Endothelial cell of umbilical vein (primary cell): ENCODE measurements at regions of chr12 and their contacts with region 1.

Region 1: GRCh38 chr12:3275171-3276041 is 198.2 kb downstream of the TSPAN9 start:
- DNase-seq: peak; percentile 48
- H3K4me3 ChIP-seq: no peak overlapping the region
- H3K27ac ChIP-seq: no peak overlapping the region
- H3K4me1 ChIP-seq: no peaks in the 10 kb centered on the region
- H3K27me3 ChIP-seq: no peaks in the 10 kb centered on the region
- CTCF ChIP-seq: peak; percentile 95 to 96
- POLR2A ChIP-seq: no peak

Region 2: GRCh38 chr12:3041558-3042164 is 233.7 kb before region 1 on chr12:
- CTCF ChIA-PET with region 1: interaction called, 14 read pairs
- POLR2A ChIA-PET with region 1: no interaction called
- dilution Hi-C with region 1: no loop called
- intact Hi-C with region 1: no loop called
- DNase-seq: peak; percentile 68
- H3K4me3 ChIP-seq: no peak overlapping the region
- H3K27ac ChIP-seq: no peak overlapping the region
- H3K4me1 ChIP-seq: no peaks in the 10 kb centered on the region
- H3K27me3 ChIP-seq: no peaks in the 10 kb centered on the region
- CTCF ChIP-seq: peak; percentile 50 to 70
- POLR2A ChIP-seq: no peak

Region 3: DNA sequence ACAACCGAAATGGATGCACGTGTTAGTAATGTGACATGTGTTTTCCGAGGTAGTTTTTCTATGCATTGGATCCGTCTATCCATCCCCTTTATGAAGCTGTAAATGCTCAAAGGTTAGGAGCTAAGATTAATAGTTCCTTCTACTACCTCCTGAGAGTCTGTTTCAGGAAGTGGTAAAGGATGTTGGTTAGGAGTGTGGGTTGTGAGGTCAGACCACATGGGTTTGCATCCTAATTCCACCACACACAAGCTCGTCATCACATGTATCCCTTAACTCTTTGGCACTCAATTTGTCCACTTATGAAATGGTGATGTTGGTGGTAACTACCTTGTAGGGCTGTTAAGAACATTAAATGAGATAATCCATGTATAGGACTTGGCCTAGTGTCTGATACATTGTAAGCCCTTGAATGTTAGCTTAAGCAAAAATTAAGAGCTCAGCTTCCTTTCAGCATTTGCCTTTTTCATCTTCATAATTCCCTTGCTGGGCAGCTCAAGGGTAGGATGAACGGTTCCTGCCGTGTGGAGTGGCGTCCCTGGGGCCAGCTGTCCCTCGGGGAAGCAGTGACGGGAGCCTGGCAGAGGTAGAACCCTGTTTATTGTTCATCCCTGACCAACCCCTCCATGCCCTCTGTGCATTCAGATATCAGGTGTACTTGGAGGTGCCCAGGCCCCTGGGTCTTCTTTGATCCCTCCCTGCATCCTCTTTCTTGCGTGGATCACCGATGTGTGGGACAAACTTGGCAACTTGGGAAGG is 145.9 kb before region 1 on chr12:
- CTCF ChIA-PET with region 1: interaction called, 312 read pairs
- POLR2A ChIA-PET with region 1: no interaction called
- dilution Hi-C with region 1: loop called (anchors 5 kb)
- intact Hi-C with region 1: no loop called
- DNase-seq: no peak
- H3K4me3 ChIP-seq: no peak overlapping the region
- H3K27ac ChIP-seq: no peak overlapping the region
- H3K4me1 ChIP-seq: peaks cover 26% of the 10 kb centered on the region
- H3K27me3 ChIP-seq: no peaks in the 10 kb centered on the region
- CTCF ChIP-seq: no peak
- POLR2A ChIP-seq: no peak

Region 4: DNA sequence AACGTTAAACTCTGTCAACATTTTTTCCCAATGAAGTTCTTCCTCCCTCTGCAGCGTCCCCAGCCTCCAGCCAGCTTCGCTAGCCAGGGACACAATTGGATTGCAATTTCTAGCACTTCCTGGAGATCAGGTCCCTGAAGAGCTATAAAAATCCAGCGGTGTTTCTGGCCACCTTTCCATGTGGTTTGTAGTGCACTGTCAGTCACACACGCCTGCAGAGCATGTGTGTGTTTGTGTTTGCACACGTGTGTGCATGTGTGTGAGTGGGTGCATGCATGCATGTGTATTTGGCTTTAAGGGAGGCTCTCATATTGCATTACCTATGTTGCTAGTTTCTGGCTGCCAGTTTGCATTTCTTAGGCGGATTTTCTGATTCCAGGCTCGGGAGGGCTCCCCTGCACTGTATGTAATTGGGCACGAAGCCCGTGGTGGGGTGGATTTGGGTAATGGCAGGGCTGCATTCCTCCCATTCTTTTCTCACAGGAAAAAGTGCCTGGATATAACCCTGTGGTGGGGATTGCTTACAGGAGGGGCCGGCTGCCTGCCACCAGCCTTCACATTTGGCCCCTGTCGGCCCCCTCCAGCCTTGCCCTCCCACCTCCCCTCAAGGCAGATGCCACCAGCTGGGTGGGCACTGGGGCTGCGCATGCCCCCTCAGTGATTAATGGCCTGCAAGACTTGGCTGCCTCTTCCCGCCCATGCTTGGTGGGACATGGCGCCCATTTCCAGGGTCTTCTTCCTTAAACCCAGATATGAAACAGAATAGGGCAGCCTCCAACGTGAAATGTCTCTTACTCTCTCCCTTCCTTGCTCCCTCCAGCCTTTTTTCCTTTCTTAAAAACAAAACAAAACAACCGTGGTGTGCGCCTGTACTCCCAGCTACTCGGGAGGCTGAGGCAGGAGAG is 124.2 kb before region 1 on chr12:
- CTCF ChIA-PET with region 1: interaction called, 312 read pairs
- POLR2A ChIA-PET with region 1: no interaction called
- dilution Hi-C with region 1: no loop called
- intact Hi-C with region 1: loop called (anchors 5 kb)
- DNase-seq: peak; percentile 37
- H3K4me3 ChIP-seq: no peak overlapping the region
- H3K27ac ChIP-seq: no peak overlapping the region
- H3K4me1 ChIP-seq: peaks cover 42% of the 10 kb centered on the region
- H3K27me3 ChIP-seq: no peaks in the 10 kb centered on the region
- CTCF ChIP-seq: no peak
- POLR2A ChIP-seq: no peak

Region 5: GRCh38 chr12:3202734-3203446 is 72.5 kb before region 1 on chr12:
- CTCF ChIA-PET with region 1: interaction called, 40 read pairs
- POLR2A ChIA-PET with region 1: no interaction called
- dilution Hi-C with region 1: no loop called
- intact Hi-C with region 1: loop called (anchors 2 kb)
- DNase-seq: peak; percentile 58
- H3K4me3 ChIP-seq: no peak overlapping the region
- H3K27ac ChIP-seq: no peak overlapping the region
- H3K4me1 ChIP-seq: peaks cover 22% of the 10 kb centered on the region
- H3K27me3 ChIP-seq: peaks cover 2 to 11% of the 10 kb centered on the region in 2 experiments
- CTCF ChIP-seq: peak; percentile 93 to 98
- POLR2A ChIP-seq: no peak

Region 6: DNA sequence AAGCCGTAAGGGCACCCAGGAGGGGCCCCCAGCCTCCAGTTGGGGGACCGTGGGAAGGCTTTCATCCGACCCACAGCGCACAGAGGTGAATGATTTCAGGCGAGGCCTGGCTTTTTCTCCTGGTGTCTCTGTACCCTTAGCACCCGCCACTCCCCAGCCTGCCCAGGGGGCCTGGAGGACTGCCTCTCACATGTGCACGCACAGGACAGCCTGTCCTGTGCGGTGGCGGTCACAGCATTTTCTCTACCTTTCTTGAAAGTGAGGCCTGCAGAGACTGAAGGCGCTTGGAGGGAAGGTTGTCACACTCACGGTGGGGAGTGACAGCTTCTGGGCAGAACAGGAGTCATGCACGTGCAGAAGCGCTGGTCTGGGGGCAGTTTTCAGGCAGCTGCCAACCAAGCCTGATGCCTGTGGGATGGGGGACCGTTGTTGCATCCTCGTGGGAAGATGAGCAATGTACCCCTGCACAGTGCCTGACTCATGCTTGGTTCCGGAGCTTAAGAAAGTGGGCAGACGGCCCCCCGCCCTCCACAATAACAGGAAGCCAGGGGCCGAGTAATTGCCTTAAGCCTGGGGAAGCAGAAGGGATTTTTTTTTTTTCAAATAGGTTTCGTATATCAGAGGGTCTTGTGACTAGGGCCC is 50.1 kb before region 1 on chr12:
- CTCF ChIA-PET with region 1: interaction called, 18 read pairs
- POLR2A ChIA-PET with region 1: no interaction called
- dilution Hi-C with region 1: no loop called
- intact Hi-C with region 1: no loop called
- DNase-seq: peak; percentile 94
- H3K4me3 ChIP-seq: peak overlapping the region in 1 of 3 experiments; percentile 8
- H3K27ac ChIP-seq: peak overlapping the region; percentile 96
- H3K4me1 ChIP-seq: peaks cover 17% of the 10 kb centered on the region
- H3K27me3 ChIP-seq: no peaks in the 10 kb centered on the region
- CTCF ChIP-seq: no peak
- POLR2A ChIP-seq: no peak

Region 7: GRCh38 chr12:3261782-3262359 is 13.5 kb before region 1 on chr12:
- CTCF ChIA-PET with region 1: interaction called, 17 read pairs
- POLR2A ChIA-PET with region 1: no interaction called
- dilution Hi-C with region 1: no loop called
- intact Hi-C with region 1: no loop called
- DNase-seq: no peak
- H3K4me3 ChIP-seq: no peak overlapping the region
- H3K27ac ChIP-seq: no peak overlapping the region
- H3K4me1 ChIP-seq: no peaks in the 10 kb centered on the region
- H3K27me3 ChIP-seq: no peaks in the 10 kb centered on the region
- CTCF ChIP-seq: no peak
- POLR2A ChIP-seq: no peak

Region 8: DNA sequence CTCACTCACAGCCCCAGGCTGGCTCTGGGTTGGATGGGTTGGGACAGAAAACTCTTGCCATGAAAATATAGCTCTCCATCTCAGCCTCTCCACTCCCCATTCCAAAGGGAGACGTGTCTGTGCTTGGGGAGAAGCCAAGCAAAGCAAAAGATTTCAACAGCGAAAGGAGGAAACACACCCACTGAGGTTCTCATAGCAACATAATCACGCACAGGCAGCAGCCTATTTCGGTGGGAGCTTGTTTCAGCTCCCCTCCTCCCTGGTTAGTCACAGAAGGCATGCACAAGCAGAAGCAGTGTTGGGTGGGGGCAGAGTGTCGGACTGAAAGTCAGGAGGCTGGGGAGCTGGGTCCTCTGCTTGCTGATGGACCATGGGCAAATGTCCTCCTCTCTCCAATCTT is 213.7 kb after region 1 on chr12:
- CTCF ChIA-PET with region 1: no interaction called
- POLR2A ChIA-PET with region 1: no interaction called
- dilution Hi-C with region 1: no loop called
- intact Hi-C with region 1: no loop called
- DNase-seq: no peak
- H3K4me3 ChIP-seq: no peak overlapping the region
- H3K27ac ChIP-seq: no peak overlapping the region
- H3K4me1 ChIP-seq: no peaks in the 10 kb centered on the region
- H3K27me3 ChIP-seq: peaks cover 37 to 43% of the 10 kb centered on the region in 2 experiments
- CTCF ChIP-seq: no peak
- POLR2A ChIP-seq: no peak

Region 9: DNA sequence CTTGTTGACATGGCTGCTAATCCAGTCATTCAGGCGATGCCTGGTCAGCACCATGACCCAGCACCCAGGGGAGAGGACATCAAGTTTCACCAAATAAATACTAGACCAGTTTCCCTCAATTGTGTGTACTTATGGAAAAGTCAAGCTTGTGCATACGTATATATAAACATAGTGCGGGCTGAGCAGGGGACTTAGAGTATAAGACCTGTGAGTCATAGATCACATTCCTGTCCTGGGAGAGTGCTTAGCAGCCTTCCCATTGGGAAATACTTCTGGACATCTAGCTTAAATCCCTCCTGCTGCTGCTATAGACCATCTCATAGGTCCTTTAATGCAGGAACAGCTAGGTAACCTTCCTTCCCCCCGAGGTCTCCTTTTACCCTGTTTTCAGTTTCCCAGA is 267.5 kb after region 1 on chr12:
- CTCF ChIA-PET with region 1: no interaction called
- POLR2A ChIA-PET with region 1: no interaction called
- dilution Hi-C with region 1: no loop called
- intact Hi-C with region 1: no loop called
- DNase-seq: no peak
- H3K4me3 ChIP-seq: no peak overlapping the region
- H3K27ac ChIP-seq: no peak overlapping the region
- H3K4me1 ChIP-seq: no peaks in the 10 kb centered on the region
- H3K27me3 ChIP-seq: peaks cover 0 to 1% of the 10 kb centered on the region in 2 experiments
- CTCF ChIP-seq: no peak
- POLR2A ChIP-seq: no peak